B cell (primary cell): ENCODE measurements at regions of chr2 and their contacts with region 1.

Region 1: DNA sequence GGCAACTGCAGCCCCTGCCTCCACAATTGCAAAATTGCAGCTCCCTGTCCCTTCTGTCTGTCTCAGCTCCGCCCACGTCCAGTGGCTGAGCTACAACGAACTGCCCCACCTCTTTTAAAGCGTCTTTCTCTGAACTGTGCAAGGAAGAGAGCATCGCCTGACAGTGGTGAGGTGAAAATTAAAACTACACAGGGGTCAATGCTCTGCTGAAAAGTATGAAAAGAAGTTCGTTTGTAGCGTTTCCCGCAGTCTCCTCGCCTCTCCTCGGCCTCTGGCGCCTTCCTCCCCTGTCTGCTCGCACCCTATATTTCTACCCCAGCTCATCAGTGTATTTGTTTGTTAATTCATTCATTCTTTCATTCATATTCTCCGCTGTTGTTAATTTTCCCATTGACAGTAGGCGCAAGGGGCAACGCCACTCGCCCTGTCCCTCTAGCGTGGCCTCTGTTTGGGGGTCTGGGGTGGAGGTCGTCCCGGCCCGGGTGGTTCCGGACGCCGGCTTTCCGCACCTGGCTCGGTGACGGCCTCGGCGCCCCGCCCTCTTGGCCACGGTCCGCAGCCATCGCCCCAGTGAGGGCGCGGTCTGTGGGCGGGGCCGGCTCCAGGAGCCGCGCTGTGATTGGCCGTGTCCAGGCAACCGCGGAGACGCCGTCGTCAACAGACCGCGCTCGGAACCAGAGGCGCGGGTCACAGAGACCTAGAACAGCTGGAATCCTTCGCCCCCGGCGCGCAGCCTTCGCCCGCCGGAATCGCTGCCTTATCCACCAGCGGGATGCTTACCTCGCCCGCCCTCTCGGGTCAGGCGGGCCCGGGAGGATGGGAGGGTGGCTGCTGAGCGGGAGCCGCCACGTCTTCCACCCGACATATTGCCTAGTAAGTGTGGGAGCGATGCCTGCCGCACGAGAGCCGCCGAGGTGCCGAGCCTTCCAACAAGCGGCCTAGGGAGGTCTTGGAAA is at the start of gene VWA3B:
- DNase-seq: peak; percentile 90
- ATAC-seq: peak; percentile 92
- H3K4me3 ChIP-seq: peak within 1 kb of the TSS; percentile 55 to 67 (median 57)
- H3K4me3 Mint-ChIP-seq: peak within 1 kb of the TSS; percentile 79
- H3K27ac ChIP-seq: peak within 1 kb of the TSS; percentile 33 to 54
- H3K27ac Mint-ChIP-seq: peak within 1 kb of the TSS; percentile 75
- H3K4me1 ChIP-seq: peaks cover 29 to 49% of the 10 kb centered on the region in 2 donors
- H3K4me1 Mint-ChIP-seq: peaks cover 47% of the 10 kb centered on the region
- H3K27me3 ChIP-seq: no peaks in the 10 kb centered on the region
- H3K27me3 Mint-ChIP-seq: no peaks in the 10 kb centered on the region
- CTCF ChIP-seq: no peak
- total RNA-seq, gene VWA3B: not detected in 2 replicates

Region 2: DNA sequence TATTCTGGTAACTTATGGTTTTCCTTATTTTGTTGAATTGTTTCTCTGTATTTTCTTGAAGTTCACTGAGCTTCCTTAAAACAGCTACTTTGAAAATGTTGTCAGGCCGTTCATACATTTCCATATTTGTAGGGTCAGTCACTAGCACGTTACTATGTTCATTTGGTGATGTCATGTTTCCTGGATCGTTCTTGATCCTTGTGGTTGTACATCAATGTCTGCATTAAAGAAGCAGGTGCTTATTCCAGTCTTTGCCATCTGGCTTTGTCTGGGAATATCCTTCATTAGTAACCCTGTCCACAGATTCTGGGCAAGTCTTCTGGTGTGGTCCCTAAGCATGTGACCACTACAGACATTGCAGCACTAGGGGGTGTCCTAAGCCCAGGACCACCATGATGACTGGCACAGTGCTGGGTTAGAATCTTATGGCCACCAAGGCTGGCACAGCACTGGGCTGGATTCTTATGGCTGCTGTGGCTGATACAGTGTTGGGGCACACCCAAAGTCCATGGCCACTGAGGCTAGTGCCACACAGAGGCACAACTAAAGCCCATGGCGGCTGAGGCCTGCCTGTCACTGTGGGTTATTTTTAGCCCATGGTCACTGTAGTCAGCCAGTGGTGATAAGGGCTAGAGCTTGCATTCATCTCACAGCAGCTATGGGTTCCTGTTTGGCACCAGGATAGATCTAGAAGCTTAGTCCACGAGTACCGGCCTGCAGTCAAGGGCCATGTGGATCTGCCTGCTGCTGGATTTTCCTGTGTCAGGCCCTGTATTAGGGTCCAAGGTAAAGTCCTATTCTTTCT is 13.4 kb after region 1 on chr2:
- CTCF ChIA-PET with region 1: no interaction called
- POLR2A ChIA-PET with region 1: no interaction called
- intact Hi-C with region 1: no loop called
- DNase-seq: no peak
- ATAC-seq: no peak
- H3K4me3 ChIP-seq: no peak overlapping the region
- H3K4me3 Mint-ChIP-seq: no peak overlapping the region
- H3K27ac ChIP-seq: no peak overlapping the region
- H3K27ac Mint-ChIP-seq: no peak overlapping the region
- H3K4me1 ChIP-seq: no peaks in the 10 kb centered on the region
- H3K4me1 Mint-ChIP-seq: no peaks in the 10 kb centered on the region
- H3K27me3 ChIP-seq: no peaks in the 10 kb centered on the region
- H3K27me3 Mint-ChIP-seq: no peaks in the 10 kb centered on the region
- CTCF ChIP-seq: no peak

Region 3: DNA sequence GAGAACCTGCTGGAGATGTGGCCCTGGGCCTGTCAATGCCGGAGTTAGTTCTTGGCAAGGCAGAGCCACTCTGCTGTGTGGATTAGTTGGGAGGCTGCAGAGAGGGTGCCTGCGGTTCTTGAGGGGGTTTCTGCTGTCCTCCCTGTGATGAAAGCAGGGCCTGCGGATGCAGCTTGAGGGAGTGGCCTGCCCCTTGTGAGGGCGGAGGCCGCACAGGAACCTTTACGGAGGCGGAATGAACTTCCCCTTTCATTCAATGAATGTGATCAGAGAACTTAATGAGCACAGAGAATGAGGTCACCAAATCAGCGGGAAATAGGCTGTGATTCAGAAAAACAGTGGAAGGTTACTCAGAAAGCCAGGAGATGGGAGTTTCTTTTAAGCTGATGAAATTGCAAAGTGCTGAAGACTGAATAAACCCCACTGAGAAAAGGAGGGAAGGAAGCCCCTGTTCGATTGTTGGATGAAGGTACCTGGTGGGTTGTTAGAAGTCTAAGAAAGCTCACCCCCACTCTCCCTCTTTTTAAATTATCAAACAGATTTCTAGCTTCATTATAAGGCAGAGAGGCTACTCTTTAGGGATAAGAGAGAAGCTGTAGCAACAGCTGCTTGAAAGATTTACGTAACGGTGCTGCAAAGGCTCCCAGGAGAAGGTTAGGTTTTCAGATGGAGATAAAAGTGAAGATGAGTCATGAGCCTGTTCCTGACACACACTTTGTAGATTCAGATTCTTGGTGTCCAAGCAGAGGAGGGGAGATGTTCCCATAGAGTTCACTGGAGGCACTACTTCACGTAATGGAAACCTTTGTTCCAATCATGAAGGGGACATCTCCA is 47.6 kb after region 1 on chr2:
- CTCF ChIA-PET with region 1: no interaction called
- POLR2A ChIA-PET with region 1: no interaction called
- intact Hi-C with region 1: loop called (anchors 5 kb)
- DNase-seq: peak; percentile 92
- ATAC-seq: peak; percentile 98
- H3K4me3 ChIP-seq: no peak overlapping the region
- H3K4me3 Mint-ChIP-seq: peak overlapping the region; percentile 32
- H3K27ac ChIP-seq: peak overlapping the region in 1 of 2 donors; percentile 31
- H3K27ac Mint-ChIP-seq: peak overlapping the region; percentile 4
- H3K4me1 ChIP-seq: peaks cover 16 to 21% of the 10 kb centered on the region in 2 donors
- H3K4me1 Mint-ChIP-seq: peaks cover 23% of the 10 kb centered on the region
- H3K27me3 ChIP-seq: no peaks in the 10 kb centered on the region
- H3K27me3 Mint-ChIP-seq: no peaks in the 10 kb centered on the region
- CTCF ChIP-seq: no peak